ENCODE measurements at regions of chr1 and their contacts with region 1.

Region 1: GRCh38 chr1:9798236-9799130 is 25.3 kb downstream of the CLSTN1 start:
- DNase-seq: peak in 4 of 5 donors; percentile 33 to 44 (median 35)
- H3K4me3 ChIP-seq: no peak overlapping the region
- H3K27ac ChIP-seq: peak overlapping the region in 1 of 2 donors; percentile 41
- H3K4me1 ChIP-seq: peaks cover 10% of the 10 kb centered on the region
- H3K27me3 ChIP-seq: no peaks in the 10 kb centered on the region
- CTCF ChIP-seq: no peak
- EP300 ChIP-seq: no peak
- POLR2A ChIP-seq: no peak

Region 2: DNA sequence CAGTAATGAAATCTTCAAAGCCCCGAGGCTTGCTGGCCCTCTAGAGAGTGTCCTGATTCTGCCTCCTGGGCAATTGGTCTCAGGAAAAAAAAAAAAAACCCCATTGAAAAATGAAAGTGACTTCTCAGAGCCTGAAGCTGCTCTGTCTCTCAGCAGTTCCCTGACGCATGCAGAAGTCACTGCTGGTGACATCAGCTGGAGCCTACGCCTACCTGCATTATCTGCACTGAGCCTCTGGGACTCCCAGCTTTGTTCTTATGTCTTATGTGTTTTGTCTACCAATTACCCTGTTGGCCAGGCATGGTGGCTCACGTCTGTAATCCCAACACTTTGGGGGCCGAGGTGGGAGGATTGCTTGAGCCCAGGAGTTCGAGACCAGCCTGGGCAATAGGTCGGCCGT is 269.3 kb before region 1 on chr1:
- intact Hi-C with region 1: no loop called
- DNase-seq: no peak
- H3K4me3 ChIP-seq: no peak overlapping the region
- H3K27ac ChIP-seq: no peak overlapping the region
- H3K4me1 ChIP-seq: no peaks in the 10 kb centered on the region
- H3K27me3 ChIP-seq: no peaks in the 10 kb centered on the region
- CTCF ChIP-seq: no peak
- EP300 ChIP-seq: no peak
- POLR2A ChIP-seq: no peak

Region 3: GRCh38 chr1:9766759-9767442 is 31.6 kb before region 1 on chr1:
- intact Hi-C with region 1: loop called in 1 of 4 experiments (anchors 2 kb)
- DNase-seq: no peak
- H3K4me3 ChIP-seq: no peak overlapping the region
- H3K27ac ChIP-seq: no peak overlapping the region
- H3K4me1 ChIP-seq: no peaks in the 10 kb centered on the region
- H3K27me3 ChIP-seq: no peaks in the 10 kb centered on the region
- CTCF ChIP-seq: no peak
- EP300 ChIP-seq: no peak
- POLR2A ChIP-seq: no peak